HepG2 (cell line): ENCODE measurements at regions of chr2 and their contacts with region 1.

Region 1: DNA sequence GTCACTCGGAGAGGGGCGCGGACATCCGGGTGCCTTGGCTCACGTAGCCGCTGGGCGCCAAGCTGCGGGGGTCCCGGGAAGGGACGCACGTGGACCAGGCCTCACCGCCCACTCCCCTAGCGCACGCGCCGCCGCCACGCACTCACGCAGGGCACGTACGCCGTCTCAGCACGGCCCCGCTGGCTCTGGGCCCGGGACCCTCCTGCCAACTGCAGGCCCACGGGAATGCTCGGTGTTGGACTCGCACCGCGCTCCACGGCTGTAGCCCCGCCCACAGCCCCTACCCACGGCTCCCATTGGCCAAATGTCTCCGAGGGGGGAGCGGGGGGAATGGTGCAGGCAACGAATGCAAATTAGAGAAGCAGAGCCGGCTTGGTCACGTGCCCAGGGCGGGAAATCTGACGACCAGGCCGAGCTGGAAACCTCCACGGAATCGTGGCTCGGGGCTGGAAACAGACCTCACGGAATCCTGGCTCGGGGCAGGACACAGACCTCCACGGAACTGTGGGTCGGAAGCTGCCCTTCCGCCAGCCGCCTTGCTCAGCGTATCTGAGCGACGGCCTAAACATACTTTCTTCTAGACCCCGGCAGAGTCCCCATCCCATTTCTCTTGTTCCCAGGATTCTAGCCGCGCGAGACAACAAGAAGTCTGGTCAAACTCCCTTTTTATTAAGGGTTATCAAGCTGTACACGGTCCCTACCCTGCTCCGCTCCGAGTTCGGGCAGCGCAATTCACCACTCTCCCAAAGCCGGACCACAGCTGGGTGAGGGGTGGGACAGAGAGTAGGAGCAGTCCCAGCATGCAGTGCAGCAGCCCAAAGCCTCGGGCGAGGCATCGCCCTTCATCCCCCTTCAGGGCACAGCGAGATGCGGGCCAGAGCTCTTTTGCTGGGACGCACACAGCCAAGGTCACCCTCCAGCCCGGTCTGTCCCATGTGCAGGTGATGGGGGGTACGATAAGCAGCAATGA is at the start of gene ABCB6:
- DNase-seq: peak; percentile 93
- ATAC-seq: peak; percentile 79
- H3K4me3 ChIP-seq: peak within 1 kb of the TSS; percentile 80 to 92 (median 85)
- H3K27ac ChIP-seq: peak within 1 kb of the TSS; percentile 92
- H3K4me1 ChIP-seq: peaks cover 43% of the 10 kb centered on the region
- H3K27me3 ChIP-seq: no peaks in the 10 kb centered on the region
- CTCF ChIP-seq: 0 out of 2 replicates have a peak, but pooled peaks have one; percentile 20
- EP300 ChIP-seq: no peak; a peak in 1 of 4 replicates
- POLR2A ChIP-seq: peak in 1 of 2 experiments; percentile 94; a peak in 2 of 4 replicates
- RAD21 ChIP-seq: no peak
- total RNA-seq, gene ABCB6: 51.3 and 137 TPM in 2 replicates

Region 2: DNA sequence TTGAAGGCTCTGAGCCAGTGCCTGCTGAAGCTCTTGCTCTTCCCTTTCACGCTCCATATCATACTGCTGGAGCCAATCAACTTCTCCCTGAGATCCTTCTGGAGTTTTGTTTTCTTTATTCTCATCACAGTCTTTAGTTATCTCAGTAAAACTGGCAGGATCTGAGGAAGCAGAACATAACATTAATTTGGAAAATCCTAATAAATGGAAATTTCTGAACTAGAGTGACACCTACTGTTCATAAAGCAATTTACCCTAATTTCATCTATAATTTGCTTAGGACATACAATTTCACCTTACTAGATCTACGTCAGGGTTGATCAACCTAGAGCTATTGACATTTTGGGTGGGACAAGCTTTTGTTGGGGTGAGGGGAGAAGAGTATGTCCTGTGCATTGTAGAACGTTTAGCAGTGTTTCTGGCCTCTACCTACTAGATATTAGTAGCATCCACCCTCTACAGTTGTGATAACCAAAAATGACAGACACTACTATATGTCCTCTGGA is 752.9 kb before region 1 on chr2:
- CTCF ChIA-PET with region 1: no interaction called
- POLR2A ChIA-PET with region 1: no interaction called
- in situ Hi-C with region 1: no loop called
- intact Hi-C with region 1: no loop called
- DNase-seq: peak; percentile 34
- ATAC-seq: peak; percentile 69
- H3K4me3 ChIP-seq: no peak overlapping the region
- H3K27ac ChIP-seq: no peak overlapping the region
- H3K4me1 ChIP-seq: 0 out of 2 replicates have a peak, but pooled peaks cover 3% of the 10 kb centered on the region
- H3K27me3 ChIP-seq: no peaks in the 10 kb centered on the region
- CTCF ChIP-seq: peak; percentile 68
- EP300 ChIP-seq: no peak
- POLR2A ChIP-seq: no peak
- RAD21 ChIP-seq: no peak

Region 3: DNA sequence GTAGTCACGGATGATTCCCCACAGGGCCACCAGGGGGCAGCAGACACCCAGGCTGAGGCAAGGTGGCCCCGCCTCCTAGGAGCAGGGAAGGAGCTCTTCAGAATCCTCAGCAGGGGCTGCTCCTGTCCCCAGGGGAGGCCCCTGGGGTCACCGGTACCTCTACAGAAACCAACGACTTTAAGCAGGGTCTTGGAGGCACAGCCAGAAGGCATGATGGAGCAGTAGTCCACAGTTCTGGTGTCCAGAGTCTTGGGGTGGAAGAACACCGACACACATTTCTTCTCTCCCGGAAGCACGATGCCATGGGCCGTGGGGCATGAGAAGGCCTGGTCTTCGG is 189.2 kb before region 1 on chr2:
- CTCF ChIA-PET with region 1: no interaction called
- POLR2A ChIA-PET with region 1: no interaction called
- in situ Hi-C with region 1: no loop called
- intact Hi-C with region 1: no loop called
- DNase-seq: peak; percentile 73
- ATAC-seq: peak; percentile 88
- H3K4me3 ChIP-seq: no peak overlapping the region
- H3K27ac ChIP-seq: no peak overlapping the region
- H3K4me1 ChIP-seq: no peaks in the 10 kb centered on the region
- H3K27me3 ChIP-seq: peaks cover 18 to 83% of the 10 kb centered on the region in 2 experiments
- CTCF ChIP-seq: peak; percentile 98
- EP300 ChIP-seq: no peak
- POLR2A ChIP-seq: no peak
- RAD21 ChIP-seq: peak; percentile 95

Region 4: DNA sequence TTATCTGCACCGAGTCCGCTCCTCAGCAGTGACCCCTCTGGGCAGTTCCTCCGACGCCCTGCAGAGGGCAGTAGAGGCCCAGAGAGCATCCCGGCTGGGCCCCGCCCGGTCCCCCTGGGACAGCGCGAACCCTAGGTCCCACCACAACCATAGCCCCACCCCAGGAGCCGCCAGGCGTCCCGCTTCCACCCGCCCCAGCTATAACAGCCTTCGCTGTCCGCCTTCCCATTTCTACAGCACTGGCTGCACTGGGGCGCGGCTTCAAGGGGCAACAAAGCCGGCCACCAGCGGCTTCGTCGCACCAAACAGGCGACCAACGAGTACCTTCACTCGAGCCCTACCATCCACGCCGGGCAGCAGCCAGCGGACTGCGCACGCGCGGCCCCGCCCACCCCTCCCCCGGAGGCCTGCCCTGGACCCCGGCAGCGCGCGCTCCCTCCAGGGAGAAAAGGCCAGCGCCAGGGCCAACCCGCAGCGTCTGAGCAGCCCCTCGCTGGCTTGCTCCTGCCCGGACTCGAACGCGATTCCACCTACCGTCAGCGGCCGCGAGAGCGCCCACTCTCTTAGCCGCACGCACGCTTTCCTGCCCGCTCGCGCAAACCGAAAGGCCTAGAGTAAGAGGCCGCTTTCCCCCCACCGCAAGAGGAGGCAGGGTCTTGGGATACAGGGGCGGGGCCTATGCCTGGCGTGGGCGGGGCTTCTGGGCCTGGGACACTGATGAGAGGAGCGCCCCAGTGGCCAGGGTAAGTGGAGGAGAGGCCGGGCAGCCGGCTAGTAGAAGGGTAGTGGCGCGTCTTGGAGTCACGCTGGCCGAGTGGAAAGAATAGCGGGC is 58.6 kb before region 1 on chr2 and contains the start of gene NHEJ1:
- CTCF ChIA-PET with region 1: no interaction called
- POLR2A ChIA-PET with region 1: no interaction called
- in situ Hi-C with region 1: no loop called
- intact Hi-C with region 1: loop called (anchors 2 kb)
- DNase-seq: peak; percentile 90
- ATAC-seq: peak; percentile 91
- H3K4me3 ChIP-seq: peak within 1 kb of the TSS; percentile 76 to 94 (median 86)
- H3K27ac ChIP-seq: peak within 1 kb of the TSS; percentile 93
- H3K4me1 ChIP-seq: peaks cover 18% of the 10 kb centered on the region
- H3K27me3 ChIP-seq: no peaks in the 10 kb centered on the region
- CTCF ChIP-seq: peak; percentile 96
- EP300 ChIP-seq: no peak
- POLR2A ChIP-seq: peak; percentile 68 to 93
- RAD21 ChIP-seq: peak; percentile 97
- total RNA-seq, gene NHEJ1: 30.7 and 42.1 TPM in 2 replicates

Region 5: GRCh38 chr2:219199470-219200211 is 19.4 kb before region 1 on chr2:
- CTCF ChIA-PET with region 1: no interaction called
- POLR2A ChIA-PET with region 1: interaction called, 16 read pairs
- in situ Hi-C with region 1: no loop called
- intact Hi-C with region 1: no loop called
- DNase-seq: no peak
- ATAC-seq: peak; percentile 39
- H3K4me3 ChIP-seq: no peak overlapping the region
- H3K27ac ChIP-seq: peak overlapping the region; percentile 25
- H3K4me1 ChIP-seq: peaks cover 33% of the 10 kb centered on the region
- H3K27me3 ChIP-seq: no peaks in the 10 kb centered on the region
- CTCF ChIP-seq: no peak
- EP300 ChIP-seq: no peak
- POLR2A ChIP-seq: no peak; a peak in 2 of 4 replicates
- RAD21 ChIP-seq: no peak

Region 6: DNA sequence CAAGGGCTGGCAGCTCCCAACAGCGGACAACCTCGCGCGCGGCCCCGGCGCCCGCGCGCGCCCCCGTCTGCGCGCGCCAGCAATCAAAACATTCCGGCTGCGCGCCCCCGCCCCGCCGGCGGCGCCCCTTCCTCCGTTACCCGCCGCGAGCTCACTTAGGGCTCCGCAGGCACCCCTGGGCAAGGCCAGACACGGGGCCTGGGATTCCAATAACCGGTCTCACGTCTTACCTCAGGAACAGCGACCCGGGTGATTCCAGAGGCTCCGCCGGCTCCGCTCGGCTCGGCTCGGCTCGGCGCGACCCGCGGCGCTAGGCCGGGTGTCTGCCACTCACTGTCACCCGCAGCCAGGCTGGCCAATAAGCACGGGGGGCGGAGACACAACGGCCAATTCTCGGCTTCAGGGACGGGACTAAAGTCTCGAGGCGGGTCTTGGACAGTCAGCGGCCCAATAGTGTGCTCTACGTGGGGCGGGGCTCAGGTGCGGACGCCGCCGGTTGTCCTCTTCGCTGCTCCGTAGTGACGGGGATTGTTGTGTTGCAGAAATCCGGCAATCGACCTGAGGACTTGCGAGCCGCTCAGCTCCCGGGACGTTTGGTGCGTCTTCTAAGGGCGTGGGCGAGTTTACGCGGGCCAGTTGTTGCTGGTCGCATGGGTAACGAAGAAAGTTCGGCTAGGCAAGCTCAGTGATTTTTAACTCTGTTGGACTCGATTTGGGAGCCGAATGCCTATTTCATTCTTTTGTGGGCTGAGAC is 10.5 kb after region 1 on chr2 and contains the starts of genes ANKZF1 and ATG9A:
- CTCF ChIA-PET with region 1: no interaction called
- POLR2A ChIA-PET with region 1: interaction called, 80 read pairs
- in situ Hi-C with region 1: no loop called
- intact Hi-C with region 1: loop called (anchors 1 kb)
- DNase-seq: peak; percentile 99
- ATAC-seq: peak; percentile 94
- H3K4me3 ChIP-seq: peak within 1 kb of the TSS; percentile 91 to 93 (median 93)
- H3K27ac ChIP-seq: peak within 1 kb of the TSS; percentile 81
- H3K4me1 ChIP-seq: peaks cover 39% of the 10 kb centered on the region
- H3K27me3 ChIP-seq: no peaks in the 10 kb centered on the region; a peak in 1 of 5 replicates
- CTCF ChIP-seq: peak; percentile 9; the same call in 1 of the 2 replicates
- EP300 ChIP-seq: peak; percentile 20 to 21; a peak in 3 of 4 replicates
- POLR2A ChIP-seq: peak; percentile 85 to 92
- RAD21 ChIP-seq: peak; percentile 73
- total RNA-seq, gene ANKZF1: 14.6 and 25.3 TPM in 2 replicates
- total RNA-seq, gene ATG9A: 22.2 and 35.0 TPM in 2 replicates

Region 7: DNA sequence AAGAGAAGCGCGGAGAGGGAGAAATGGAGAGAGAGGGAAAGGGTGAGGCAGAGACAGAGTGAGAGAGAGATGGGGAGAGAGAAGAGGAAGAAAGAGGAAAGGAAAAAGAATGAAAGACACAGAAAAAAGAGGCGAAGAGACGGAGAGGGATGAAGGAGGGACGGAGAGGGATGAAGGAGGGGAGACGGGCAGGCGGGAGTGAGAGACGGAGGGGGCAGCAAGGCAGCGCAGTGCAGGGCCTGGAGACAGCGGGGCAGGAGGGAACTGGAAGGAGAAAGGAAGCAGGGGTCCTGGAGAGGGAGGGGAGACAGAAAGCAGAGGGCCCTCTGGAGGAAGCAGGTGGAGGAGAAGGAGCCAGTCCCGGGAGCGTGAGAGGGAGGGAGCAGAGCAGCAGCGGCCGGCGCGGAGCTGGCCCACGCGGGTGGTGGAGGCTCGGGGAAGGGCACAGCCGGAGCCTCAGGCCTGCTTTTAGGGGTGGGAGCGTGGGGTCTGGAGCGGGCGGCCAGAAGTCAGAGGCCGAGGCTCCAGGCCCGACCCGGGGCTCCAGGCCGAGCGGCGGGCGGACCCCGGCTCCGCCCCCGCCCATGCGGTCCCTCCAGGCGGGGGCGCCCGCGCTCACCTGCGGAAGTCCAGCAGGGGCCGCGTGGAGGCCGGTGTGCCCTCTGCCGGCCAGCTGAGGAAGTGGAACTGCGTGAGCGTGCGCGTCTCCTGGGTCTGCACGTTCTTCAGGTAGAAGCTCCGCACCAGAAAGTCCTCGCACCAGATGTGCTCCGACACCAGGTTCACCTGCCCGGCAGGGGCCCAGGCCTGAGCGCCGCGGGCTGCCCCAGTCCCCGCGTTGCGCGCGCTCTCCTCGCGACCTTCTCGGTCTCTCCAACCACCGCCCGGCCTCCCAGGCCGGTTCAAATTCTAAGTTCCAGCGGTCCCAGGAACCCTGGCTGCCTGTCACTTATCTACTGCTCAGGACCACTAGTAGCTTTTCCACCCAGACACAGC is 75.6 kb after region 1 on chr2:
- CTCF ChIA-PET with region 1: interaction called, 8 read pairs
- POLR2A ChIA-PET with region 1: interaction called, 15 read pairs
- in situ Hi-C with region 1: no loop called
- intact Hi-C with region 1: loop called (anchors 2 kb)
- DNase-seq: peak; percentile 80
- ATAC-seq: peak; percentile 85
- H3K4me3 ChIP-seq: peak overlapping the region; percentile 60 to 81 (median 80)
- H3K27ac ChIP-seq: no peak overlapping the region
- H3K4me1 ChIP-seq: peaks cover 36% of the 10 kb centered on the region
- H3K27me3 ChIP-seq: peaks cover 6 to 83% of the 10 kb centered on the region in 2 experiments; a peak in 4 of 5 replicates
- CTCF ChIP-seq: peak; percentile 93
- EP300 ChIP-seq: peak; percentile 48 to 53; a peak in 1 of 4 replicates
- POLR2A ChIP-seq: peak; percentile 48 to 70; a peak in 3 of 4 replicates
- RAD21 ChIP-seq: peak; percentile 99

Region 8: DNA sequence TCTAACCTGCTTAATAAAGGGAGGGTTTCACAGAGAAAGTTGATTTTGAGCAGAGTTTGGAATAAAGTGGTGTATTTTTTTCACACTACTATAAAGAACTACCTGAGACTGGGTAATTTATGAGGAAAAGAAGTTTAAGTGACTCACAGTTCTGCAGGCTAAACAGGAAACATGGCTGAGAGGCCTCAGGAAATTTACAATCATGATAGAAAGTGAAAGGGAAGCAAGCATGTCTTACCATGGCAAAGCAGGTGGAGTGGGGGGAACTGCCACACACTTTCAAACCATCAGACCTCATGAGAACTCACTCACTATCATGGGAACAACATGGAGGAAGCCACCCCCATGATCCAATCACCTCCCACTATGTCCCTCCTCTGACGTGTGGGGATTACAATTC is 1806.4 kb after region 1 on chr2:
- CTCF ChIA-PET with region 1: no interaction called
- POLR2A ChIA-PET with region 1: no interaction called
- in situ Hi-C with region 1: no loop called
- intact Hi-C with region 1: no loop called
- DNase-seq: no peak
- ATAC-seq: no peak
- H3K4me3 ChIP-seq: no peak overlapping the region
- H3K27ac ChIP-seq: no peak overlapping the region
- H3K4me1 ChIP-seq: no peaks in the 10 kb centered on the region
- H3K27me3 ChIP-seq: no peaks in the 10 kb centered on the region
- CTCF ChIP-seq: no peak
- EP300 ChIP-seq: no peak
- POLR2A ChIP-seq: no peak
- RAD21 ChIP-seq: no peak